Sciatic nerve (tissue), 2 donors: ENCODE measurements at regions of chr11 and their contacts with region 1.

Region 1: GRCh38 chr11:64298966-64299846 is 952 bp upstream of the CATSPERZ start:
- DNase-seq: peak; percentile 84
- ATAC-seq: peak; percentile 45

Region 2: DNA sequence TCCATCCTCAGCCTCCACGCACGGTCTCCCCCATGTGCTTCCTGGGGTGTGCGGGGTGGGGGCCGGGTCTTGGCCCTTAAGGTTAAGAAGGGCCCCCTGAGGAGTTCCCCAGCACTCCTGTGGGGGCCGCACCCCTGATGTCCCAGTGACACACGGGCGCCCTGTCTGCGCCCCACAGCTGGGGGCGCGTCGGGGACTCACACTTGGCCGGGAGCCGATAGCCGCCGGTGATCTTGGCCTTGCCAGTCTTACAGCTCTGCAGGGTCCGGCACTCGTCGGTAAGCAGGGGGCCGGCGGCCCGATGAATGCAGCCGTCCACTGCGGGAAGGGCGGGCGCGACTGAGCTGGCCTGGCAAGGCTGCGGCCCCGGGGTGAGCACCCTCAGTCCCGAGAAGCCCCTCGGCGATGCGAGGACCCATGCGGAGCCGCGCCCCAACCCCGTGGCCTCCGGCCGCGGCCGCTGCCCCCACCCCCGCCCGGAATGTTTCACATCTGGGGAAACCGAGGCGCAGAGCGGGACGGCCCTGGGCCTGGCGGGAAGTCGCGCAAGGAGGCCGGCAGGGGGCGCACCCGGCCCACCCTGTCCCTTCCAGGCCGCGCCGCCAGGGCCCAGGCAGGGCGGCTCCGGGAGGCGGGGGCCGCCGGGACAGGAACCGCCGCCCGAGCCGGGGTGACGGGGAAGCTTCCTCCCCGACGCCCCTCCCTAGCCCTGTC is 299.0 kb before region 1 on chr11:
- intact Hi-C with region 1: loop called (anchors 10 kb)
- DNase-seq: peak; percentile 82
- ATAC-seq: peak; percentile 75

Region 3: GRCh38 chr11:64204464-64204989 is 94.7 kb before region 1 on chr11:
- intact Hi-C with region 1: loop called (anchors 10 kb)
- DNase-seq: peak; percentile 93
- ATAC-seq: peak; percentile 80